Activated CD4-positive, alpha-beta T cell treated with anti-CD3 and anti-CD28 coated beads for 36 hours (primary cell): ENCODE measurements at regions of chr4 and their contacts with region 1.

Region 1: GRCh38 chr4:70687821-70688794 is at the start of gene UTP3:
- DNase-seq: peak; percentile 97
- ATAC-seq: peak; percentile 92
- H3K4me3 Mint-ChIP-seq: peak within 1 kb of the TSS; percentile 96
- H3K27ac Mint-ChIP-seq: peak within 1 kb of the TSS; percentile 99
- H3K4me1 Mint-ChIP-seq: peaks cover 31% of the 10 kb centered on the region
- H3K27me3 Mint-ChIP-seq: no peaks in the 10 kb centered on the region
- total RNA-seq, gene UTP3: 32.6 to 34.3 TPM

Region 2: DNA sequence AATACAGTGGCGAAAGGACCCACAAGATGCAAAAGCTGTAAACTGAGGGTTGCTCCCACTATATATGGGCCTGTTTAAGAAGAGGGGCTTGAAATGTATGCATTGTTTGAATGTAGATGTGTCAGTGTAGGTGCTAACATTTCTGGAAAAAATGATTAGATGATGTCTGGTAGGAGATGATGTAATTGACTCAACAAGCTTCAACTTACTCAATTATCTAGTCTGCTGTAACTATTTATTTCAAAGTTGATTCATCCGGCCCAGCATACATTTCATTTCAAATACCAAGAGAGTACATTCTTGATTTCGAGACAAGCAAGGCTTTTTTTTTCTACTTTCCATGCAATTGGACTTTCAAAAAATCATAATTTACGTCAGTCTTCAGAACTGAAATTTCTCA is 68.8 kb before region 1 on chr4:
- CTCF ChIA-PET with region 1: no interaction called
- POLR2A ChIA-PET with region 1: no interaction called
- intact Hi-C with region 1: loop called in 1 of 2 experiments (anchors 5 kb)
- DNase-seq: no peak
- ATAC-seq: peak; percentile 73
- H3K4me3 Mint-ChIP-seq: no peak overlapping the region
- H3K27ac Mint-ChIP-seq: no peak overlapping the region
- H3K4me1 Mint-ChIP-seq: peaks cover 3% of the 10 kb centered on the region
- H3K27me3 Mint-ChIP-seq: peaks cover under 1% of the 10 kb centered on the region

Region 3: GRCh38 chr4:70734168-70734954 is 46.3 kb after region 1 on chr4:
- CTCF ChIA-PET with region 1: interaction called, 5 read pairs
- POLR2A ChIA-PET with region 1: no interaction called
- intact Hi-C with region 1: loop called (anchors 1 kb)
- DNase-seq: peak; percentile 39
- ATAC-seq: peak; percentile 92
- H3K4me3 Mint-ChIP-seq: peak overlapping the region; percentile 52
- H3K27ac Mint-ChIP-seq: peak overlapping the region; percentile 74
- H3K4me1 Mint-ChIP-seq: peaks cover 36% of the 10 kb centered on the region
- H3K27me3 Mint-ChIP-seq: no peaks in the 10 kb centered on the region

Region 4: DNA sequence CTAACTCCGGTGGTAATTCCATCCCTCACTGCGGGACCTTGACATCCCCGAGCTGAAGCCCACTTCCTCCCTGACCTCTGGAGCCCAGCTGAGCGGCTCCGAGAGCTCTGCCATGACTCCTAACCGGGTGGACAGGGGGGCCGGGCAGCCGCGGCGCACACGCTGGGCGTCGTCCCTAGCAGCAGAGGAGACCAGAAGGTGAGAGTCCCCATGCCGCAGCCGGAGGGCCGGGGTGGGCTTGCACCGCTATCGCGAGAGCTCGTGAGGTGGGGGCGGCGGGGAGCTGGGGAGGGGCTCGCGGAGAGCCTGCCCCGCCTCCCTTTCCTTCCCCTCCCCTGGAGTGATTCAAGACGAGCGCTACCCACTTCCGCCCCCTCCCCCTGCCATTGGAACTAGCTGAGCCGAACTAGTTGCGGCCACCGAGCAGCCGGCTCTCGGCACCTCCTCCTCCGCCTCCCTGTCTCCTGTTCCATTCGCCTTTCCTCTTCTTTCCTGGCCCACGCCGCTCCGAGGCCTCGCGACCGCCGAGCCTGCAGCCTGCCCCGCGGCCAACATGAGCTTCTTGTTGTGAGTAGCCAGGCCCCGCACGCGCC is 214.0 kb after region 1 on chr4 and contains the start of gene MOB1B:
- CTCF ChIA-PET with region 1: interaction called, 9 read pairs
- POLR2A ChIA-PET with region 1: no interaction called
- intact Hi-C with region 1: loop called (anchors 1 to 5 kb)
- DNase-seq: peak; percentile 94
- ATAC-seq: peak; percentile 96
- H3K4me3 Mint-ChIP-seq: peak within 1 kb of the TSS; percentile 96
- H3K27ac Mint-ChIP-seq: peak within 1 kb of the TSS; percentile 89
- H3K4me1 Mint-ChIP-seq: peaks cover 27% of the 10 kb centered on the region
- H3K27me3 Mint-ChIP-seq: no peaks in the 10 kb centered on the region
- total RNA-seq, gene MOB1B: 18.5 to 21.9 TPM

Region 5: DNA sequence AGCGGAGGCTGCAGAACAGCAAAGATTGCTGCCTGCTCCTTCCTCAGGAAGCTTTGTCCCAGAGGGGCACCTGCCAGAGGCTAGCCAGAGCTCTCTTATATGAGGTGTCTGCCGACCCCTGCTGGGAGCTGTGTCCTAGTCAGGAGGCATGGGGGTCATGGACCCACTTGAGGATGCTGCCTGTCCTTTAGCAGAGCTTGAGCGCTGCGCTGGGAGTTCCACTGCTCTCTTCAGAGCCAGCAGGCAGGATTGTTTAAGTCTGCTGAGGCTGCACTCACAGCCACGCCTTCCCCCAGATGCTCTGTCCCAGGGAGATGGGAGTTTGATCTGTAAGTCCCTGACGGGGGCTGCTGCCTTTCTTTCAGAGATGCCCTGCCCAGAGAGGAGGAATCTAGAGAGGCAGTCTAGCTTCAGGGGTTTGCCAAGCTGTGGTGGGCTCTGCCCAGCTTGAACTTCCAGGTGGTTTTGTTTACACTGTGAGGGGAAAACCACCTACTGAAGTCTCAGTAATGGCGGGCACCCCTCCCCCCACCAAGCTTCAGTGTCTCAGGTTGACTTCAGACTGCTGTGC is 316.3 kb after region 1 on chr4:
- CTCF ChIA-PET with region 1: interaction called, 3 read pairs
- POLR2A ChIA-PET with region 1: no interaction called
- intact Hi-C with region 1: loop called in 1 of 2 experiments (anchors 2 kb)
- DNase-seq: peak; percentile 79
- ATAC-seq: peak; percentile 48
- H3K4me3 Mint-ChIP-seq: peak overlapping the region; percentile 21
- H3K27ac Mint-ChIP-seq: peak overlapping the region; percentile 81
- H3K4me1 Mint-ChIP-seq: peaks cover 84% of the 10 kb centered on the region
- H3K27me3 Mint-ChIP-seq: no peaks in the 10 kb centered on the region